H1 (cell line): ENCODE measurements at regions of chr1 and their contacts with region 1.

Region 1: GRCh38 chr1:114499489-114499888 is 11.5 kb downstream of the TRIM33 start:
- DNase-seq: no peak
- H3K4me3 ChIP-seq: no peak overlapping the region
- H3K27ac ChIP-seq: no peak overlapping the region
- H3K4me1 ChIP-seq: no peaks in the 10 kb centered on the region; a peak in 1 of 7 replicates
- H3K27me3 ChIP-seq: no peaks in the 10 kb centered on the region
- CTCF ChIP-seq: no peak
- EP300 ChIP-seq: no peak
- POLR2A ChIP-seq: no peak
- RAD21 ChIP-seq: no peak

Region 2: DNA sequence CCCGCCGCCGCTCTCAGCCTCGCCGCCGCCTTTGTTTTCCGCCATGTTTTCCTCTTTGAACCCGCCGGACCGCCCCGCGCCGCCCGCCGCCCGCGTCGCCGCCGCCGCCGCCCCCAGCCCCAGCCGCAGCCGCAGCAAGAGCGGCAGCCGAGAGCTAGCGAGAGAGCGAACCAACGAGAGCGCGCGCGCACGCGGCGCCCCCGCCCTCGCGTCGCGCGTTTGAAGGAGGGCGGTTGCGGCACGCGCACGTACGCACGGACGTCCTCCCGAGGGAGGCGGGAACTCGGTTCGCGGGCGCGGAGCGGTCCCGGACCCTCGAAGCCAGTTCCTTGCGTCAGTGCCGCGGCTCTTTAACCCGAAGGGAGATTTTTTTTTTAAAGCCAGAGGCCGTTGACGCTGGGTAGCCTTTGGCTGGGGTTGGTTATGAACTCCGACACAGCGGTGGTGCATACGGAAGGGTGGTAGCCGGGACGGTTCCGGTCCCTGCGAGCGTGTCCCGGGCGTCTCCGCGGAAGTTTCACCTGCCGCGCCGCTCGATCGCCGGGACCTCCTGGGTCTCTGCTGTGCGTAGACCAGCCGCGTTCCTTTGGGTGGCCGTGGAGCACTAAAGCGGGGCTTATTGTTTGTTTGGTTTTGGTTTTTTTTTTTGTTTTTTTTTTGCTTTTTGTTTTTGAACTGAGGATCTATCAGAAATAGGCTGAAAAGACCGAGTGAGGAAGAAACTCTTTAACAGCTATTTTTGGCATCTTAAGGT is 11.7 kb after region 1 on chr1 and contains the start of gene TRIM33:
- CTCF ChIA-PET with region 1: no interaction called
- POLR2A ChIA-PET with region 1: interaction called, 19 read pairs
- DNase-seq: peak; percentile 83 to 90
- H3K4me3 ChIP-seq: peak within 1 kb of the TSS; percentile 90 to 99 (median 95)
- H3K27ac ChIP-seq: peak within 1 kb of the TSS; percentile 91
- H3K4me1 ChIP-seq: peaks cover 0 to 5% (median 3%) of the 10 kb centered on the region in 4 experiments; a peak in 5 of 7 replicates
- H3K27me3 ChIP-seq: no peaks in the 10 kb centered on the region
- CTCF ChIP-seq: no peak
- EP300 ChIP-seq: no peak
- POLR2A ChIP-seq: peak in 1 of 2 experiments; percentile 78; a peak in 2 of 3 replicates
- RAD21 ChIP-seq: no peak
- total RNA-seq, gene TRIM33: 50.8 and 52.3 TPM in 2 replicates